ENCODE measurements at regions of chr3 and their contacts with region 1.

Region 1: GRCh38 chr3:186976837-186977750 is 46.8 kb downstream of the ST6GAL1 start:
- DNase-seq: peak; percentile 79
- ATAC-seq: peak; percentile 87

Region 2: DNA sequence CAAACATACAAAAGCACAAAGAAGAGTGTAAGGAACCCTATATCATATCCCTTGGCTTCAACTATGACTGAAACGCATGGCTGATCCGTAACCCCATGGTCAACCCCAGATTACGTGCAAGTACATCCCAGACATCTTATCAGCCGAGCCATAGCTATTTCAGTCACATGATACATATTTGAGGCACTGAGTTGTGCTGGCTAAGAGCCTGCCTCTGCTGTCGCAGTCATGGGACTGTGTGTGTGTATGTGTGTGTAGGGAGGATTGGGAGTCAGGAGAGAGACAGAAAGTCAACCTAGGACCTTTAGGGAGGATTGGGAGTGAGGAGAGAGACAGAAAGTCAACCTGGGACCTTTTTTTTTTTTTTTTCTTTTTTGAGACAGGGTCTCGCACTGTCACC is 38.4 kb before region 1 on chr3:
- intact Hi-C with region 1: loop called (anchors 5 kb)
- DNase-seq: peak; percentile 68
- ATAC-seq: peak; percentile 82

Region 3: DNA sequence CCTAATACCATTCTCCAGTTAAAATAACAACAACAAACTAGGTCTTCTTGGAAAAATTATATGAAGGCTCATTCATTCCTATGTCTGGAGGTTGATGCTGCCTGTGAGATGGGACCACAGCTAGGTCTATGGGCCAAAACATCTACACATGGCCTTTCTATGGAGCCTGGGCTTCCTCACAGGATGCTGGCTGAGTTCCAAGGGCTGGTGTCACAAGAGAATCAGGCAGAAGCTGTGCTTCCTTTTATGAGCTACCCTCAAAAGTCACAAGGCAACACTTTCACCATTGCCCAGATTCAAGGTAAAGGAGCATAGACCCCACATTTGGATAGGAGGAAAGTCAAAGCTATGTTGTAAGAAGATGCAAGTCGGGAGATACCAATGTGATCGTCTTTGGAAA is 729.9 kb after region 1 on chr3:
- intact Hi-C with region 1: no loop called
- DNase-seq: no peak
- ATAC-seq: peak; percentile 27

Measured in left ventricle myocardium superior (tissue), 1 donor.